AG04449 (cell line): ENCODE measurements at regions of chr2 and their contacts with region 1.

Region 1: GRCh38 chr2:227884511-227884947 is 13.1 kb downstream of the DAW1 start:
- DNase-seq: no peak
- H3K4me3 ChIP-seq: no peak overlapping the region
- CTCF ChIP-seq: peak; percentile 96

Region 2: DNA sequence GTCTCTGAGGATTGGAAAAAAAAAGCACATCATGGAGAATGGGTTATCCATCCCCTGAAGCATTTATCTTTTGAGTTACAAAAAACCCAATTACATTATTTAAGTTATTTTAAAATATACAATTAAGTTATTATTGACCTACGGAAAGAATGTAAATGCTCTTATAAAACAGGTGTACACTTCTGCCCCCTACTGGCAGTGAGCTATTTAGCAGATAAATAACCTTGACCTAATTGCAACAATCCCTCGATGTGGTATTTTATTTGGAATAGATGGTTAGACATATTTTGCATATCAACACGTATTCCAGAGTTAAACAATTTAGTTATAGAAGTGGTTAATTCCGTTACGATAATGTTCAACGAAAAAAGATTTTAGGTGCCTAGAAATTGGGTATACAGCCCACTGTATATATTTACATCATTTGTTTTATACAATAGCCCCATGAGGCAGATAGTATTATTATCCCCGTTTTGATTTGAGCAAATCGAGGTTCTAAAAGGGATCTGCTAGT is 22.2 kb before region 1 on chr2:
- CTCF ChIA-PET with region 1: interaction called, 10 read pairs
- POLR2A ChIA-PET with region 1: no interaction called
- DNase-seq: no peak
- H3K4me3 ChIP-seq: no peak overlapping the region
- CTCF ChIP-seq: peak; percentile 45

Region 3: GRCh38 chr2:227871375-227871788 is 13.1 kb before region 1 on chr2 and contains the start of gene DAW1:
- CTCF ChIA-PET with region 1: interaction called, 31 read pairs
- POLR2A ChIA-PET with region 1: no interaction called
- DNase-seq: no peak
- H3K4me3 ChIP-seq: peak within 1 kb of the TSS; percentile 46
- CTCF ChIP-seq: no peak